ENCODE measurements at regions of chr1 and their contacts with region 1.

Region 1: GRCh38 chr1:46442317-46443161 is 47.1 kb upstream of the DMBX1 start:
- DNase-seq: peak; percentile 85
- H3K4me3 Mint-ChIP-seq: peak overlapping the region; percentile 84
- H3K27ac Mint-ChIP-seq: peak overlapping the region; percentile 65
- H3K4me1 Mint-ChIP-seq: peaks cover 18% of the 10 kb centered on the region
- H3K27me3 Mint-ChIP-seq: peaks cover 12% of the 10 kb centered on the region

Region 2: GRCh38 chr1:46406881-46407608 is 35.5 kb before region 1 on chr1:
- CTCF ChIA-PET with region 1: interaction called, 3 read pairs
- intact Hi-C with region 1: loop called (anchors 2 kb)
- DNase-seq: no peak
- H3K4me3 Mint-ChIP-seq: no peak overlapping the region
- H3K27ac Mint-ChIP-seq: no peak overlapping the region
- H3K4me1 Mint-ChIP-seq: no peaks in the 10 kb centered on the region
- H3K27me3 Mint-ChIP-seq: no peaks in the 10 kb centered on the region

Region 3: GRCh38 chr1:46547481-46548383 is 105.2 kb after region 1 on chr1:
- CTCF ChIA-PET with region 1: interaction called, 5 read pairs
- intact Hi-C with region 1: loop called (anchors 1 kb)
- DNase-seq: peak; percentile 18
- H3K4me3 Mint-ChIP-seq: no peak overlapping the region
- H3K27ac Mint-ChIP-seq: no peak overlapping the region
- H3K4me1 Mint-ChIP-seq: no peaks in the 10 kb centered on the region
- H3K27me3 Mint-ChIP-seq: peaks cover 41% of the 10 kb centered on the region

Region 4: GRCh38 chr1:46724991-46725735 is 282.6 kb after region 1 on chr1:
- CTCF ChIA-PET with region 1: interaction called, 6 read pairs
- intact Hi-C with region 1: loop called (anchors 1 kb)
- DNase-seq: peak; percentile 83
- H3K4me3 Mint-ChIP-seq: no peak overlapping the region
- H3K27ac Mint-ChIP-seq: no peak overlapping the region
- H3K4me1 Mint-ChIP-seq: no peaks in the 10 kb centered on the region
- H3K27me3 Mint-ChIP-seq: peaks cover 23% of the 10 kb centered on the region